CD4-positive, alpha-beta memory T cell (primary cell): ENCODE measurements at regions of chr1 and their contacts with region 1.

Region 1: GRCh38 chr1:44029906-44030604 is 1.2 kb downstream of the SLC6A9 start:
- DNase-seq: peak; percentile 84 to 89 (median 86)
- H3K4me3 ChIP-seq: peak overlapping the region; percentile 66 to 69
- H3K4me3 Mint-ChIP-seq: peak overlapping the region; percentile 89 to 98 (median 96)
- H3K27ac ChIP-seq: peak overlapping the region; percentile 64
- H3K27ac Mint-ChIP-seq: peak overlapping the region; percentile 95 to 97 (median 96)
- H3K4me1 ChIP-seq: peaks cover 18% of the 10 kb centered on the region
- H3K4me1 Mint-ChIP-seq: peaks cover 17 to 39% (median 26%) of the 10 kb centered on the region in 4 donors
- H3K27me3 ChIP-seq: no peaks in the 10 kb centered on the region
- H3K27me3 Mint-ChIP-seq: no peaks in the 10 kb centered on the region

Region 2: DNA sequence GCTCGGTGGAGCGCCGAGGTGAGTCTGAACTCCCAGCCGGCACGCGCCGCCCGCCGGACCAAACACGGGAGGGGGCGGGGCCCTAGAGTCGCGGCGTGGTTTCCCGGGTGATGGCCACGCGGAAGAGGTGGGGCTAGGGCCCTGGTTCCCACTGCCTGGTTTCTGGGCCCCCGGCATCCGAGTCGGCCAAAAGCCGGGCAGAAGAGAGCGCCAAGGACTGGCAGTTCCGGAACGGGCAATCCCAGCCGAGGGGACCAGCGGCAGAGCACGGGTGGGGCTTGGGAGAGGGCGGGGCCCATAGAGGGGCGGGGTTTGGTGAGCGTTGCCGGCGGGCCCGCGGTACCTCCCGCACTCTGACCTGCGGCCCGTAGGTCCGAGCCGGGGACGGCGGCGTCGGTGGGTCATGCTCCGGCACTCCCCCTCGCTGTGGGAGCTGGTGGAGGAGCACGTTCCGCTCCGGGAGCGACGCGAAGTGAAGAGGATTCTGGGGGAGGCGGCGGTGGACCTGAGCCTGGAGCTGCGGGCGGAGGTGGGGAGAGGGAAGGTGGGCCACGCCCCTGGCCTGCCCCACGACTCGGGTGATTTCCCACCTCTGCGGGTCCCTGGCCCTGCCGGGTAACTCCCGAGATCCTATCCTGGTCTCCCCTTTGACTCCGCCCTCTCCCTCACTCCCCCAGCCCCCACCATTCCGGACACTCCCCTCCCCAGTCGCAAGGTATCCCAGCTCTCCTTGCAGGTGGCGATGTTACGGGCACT is 38.4 kb before region 1 on chr1 and contains the start of gene CCDC24:
- CTCF ChIA-PET with region 1: no interaction called
- POLR2A ChIA-PET with region 1: interaction called, 5 read pairs
- intact Hi-C with region 1: loop called (anchors 1 kb)
- DNase-seq: peak; percentile 62 to 81 (median 69)
- H3K4me3 ChIP-seq: peak within 1 kb of the TSS; percentile 46 to 74
- H3K4me3 Mint-ChIP-seq: peak within 1 kb of the TSS; percentile 92 to 98 (median 94)
- H3K27ac ChIP-seq: peak within 1 kb of the TSS; percentile 70
- H3K27ac Mint-ChIP-seq: peak within 1 kb of the TSS; percentile 71 to 95 (median 93)
- H3K4me1 ChIP-seq: peaks cover 14% of the 10 kb centered on the region
- H3K4me1 Mint-ChIP-seq: peaks cover 5 to 21% (median 14%) of the 10 kb centered on the region in 4 donors
- H3K27me3 ChIP-seq: no peaks in the 10 kb centered on the region
- H3K27me3 Mint-ChIP-seq: no peaks in the 10 kb centered on the region
- total RNA-seq, gene CCDC24: 1.5 to 1.9 TPM

Region 3: GRCh38 chr1:44089371-44090049 is 59.5 kb after region 1 on chr1:
- CTCF ChIA-PET with region 1: no interaction called
- POLR2A ChIA-PET with region 1: no interaction called
- intact Hi-C with region 1: no loop called
- DNase-seq: no peak
- H3K4me3 ChIP-seq: no peak overlapping the region
- H3K4me3 Mint-ChIP-seq: no peak overlapping the region
- H3K27ac ChIP-seq: no peak overlapping the region
- H3K27ac Mint-ChIP-seq: no peak overlapping the region
- H3K4me1 ChIP-seq: no peaks in the 10 kb centered on the region
- H3K4me1 Mint-ChIP-seq: peaks cover 0 to 2% (median 0%) of the 10 kb centered on the region in 4 donors
- H3K27me3 ChIP-seq: no peaks in the 10 kb centered on the region
- H3K27me3 Mint-ChIP-seq: peaks cover 20 to 22% of the 10 kb centered on the region in 2 donors